ENCODE measurements at regions of chr21 and their contacts with region 1.

Region 1: GRCh38 chr21:42593007-42593806 is 60.2 kb upstream of the PDE9A start:
- DNase-seq: peak; percentile 69
- ATAC-seq: peak; percentile 73
- H3K4me3 ChIP-seq: no peak overlapping the region
- H3K4me3 Mint-ChIP-seq: no peak overlapping the region
- H3K27ac ChIP-seq: no peak overlapping the region
- H3K27ac Mint-ChIP-seq: no peak overlapping the region
- H3K4me1 ChIP-seq: peaks cover 10 to 17% of the 10 kb centered on the region in 2 donors
- H3K4me1 Mint-ChIP-seq: peaks cover 14% of the 10 kb centered on the region
- H3K27me3 ChIP-seq: peaks cover 0 to 12% (median 0%) of the 10 kb centered on the region in 4 experiments
- H3K27me3 Mint-ChIP-seq: peaks cover 18% of the 10 kb centered on the region
- CTCF ChIP-seq: peak; percentile 74

Region 2: DNA sequence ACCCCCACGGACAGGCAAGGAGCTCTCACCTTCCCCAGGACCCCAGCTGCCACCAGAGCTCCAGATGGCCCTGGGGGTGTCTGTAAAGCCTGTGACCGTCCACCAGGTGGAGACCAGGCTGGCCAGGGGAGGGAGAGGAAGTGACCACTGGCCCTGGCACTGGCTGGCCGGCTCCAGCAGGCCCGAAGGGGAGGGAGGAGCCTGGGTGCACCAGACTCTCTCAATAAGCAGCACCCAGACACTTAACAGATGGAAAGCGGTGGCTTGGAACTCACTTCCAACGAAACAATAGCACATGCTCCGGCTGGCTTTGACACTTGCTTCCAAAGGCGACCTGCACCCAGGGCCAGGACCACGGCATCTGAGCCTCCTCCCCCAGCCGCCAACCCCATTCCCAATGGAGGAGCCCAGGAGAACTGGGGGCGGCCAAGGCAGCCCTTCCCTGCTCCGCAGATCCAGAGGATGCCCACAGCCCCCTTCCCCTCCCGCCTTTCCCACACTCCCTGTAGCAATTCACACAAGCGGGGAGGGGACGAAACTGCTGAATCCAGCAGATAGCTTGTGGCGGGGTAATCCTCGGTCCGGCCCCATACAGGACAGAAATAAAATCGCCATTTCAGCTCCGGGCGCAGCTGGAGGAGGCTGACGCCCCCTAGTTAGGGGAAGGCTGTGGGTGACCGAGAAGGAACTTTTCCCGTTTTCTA is 59.5 kb after region 1 on chr21:
- CTCF ChIA-PET with region 1: no interaction called
- POLR2A ChIA-PET with region 1: no interaction called
- intact Hi-C with region 1: loop called (anchors 10 kb)
- DNase-seq: no peak
- ATAC-seq: no peak
- H3K4me3 ChIP-seq: peak overlapping the region in 1 of 5 experiments; percentile 19
- H3K4me3 Mint-ChIP-seq: peak overlapping the region; percentile 80
- H3K27ac ChIP-seq: no peak overlapping the region
- H3K27ac Mint-ChIP-seq: peak overlapping the region; percentile 32
- H3K4me1 ChIP-seq: peaks cover 31 to 34% of the 10 kb centered on the region in 2 donors
- H3K4me1 Mint-ChIP-seq: peaks cover 16% of the 10 kb centered on the region
- H3K27me3 ChIP-seq: peaks cover 0 to 53% (median 30%) of the 10 kb centered on the region in 4 experiments
- H3K27me3 Mint-ChIP-seq: peaks cover 49% of the 10 kb centered on the region
- CTCF ChIP-seq: no peak

Region 3: DNA sequence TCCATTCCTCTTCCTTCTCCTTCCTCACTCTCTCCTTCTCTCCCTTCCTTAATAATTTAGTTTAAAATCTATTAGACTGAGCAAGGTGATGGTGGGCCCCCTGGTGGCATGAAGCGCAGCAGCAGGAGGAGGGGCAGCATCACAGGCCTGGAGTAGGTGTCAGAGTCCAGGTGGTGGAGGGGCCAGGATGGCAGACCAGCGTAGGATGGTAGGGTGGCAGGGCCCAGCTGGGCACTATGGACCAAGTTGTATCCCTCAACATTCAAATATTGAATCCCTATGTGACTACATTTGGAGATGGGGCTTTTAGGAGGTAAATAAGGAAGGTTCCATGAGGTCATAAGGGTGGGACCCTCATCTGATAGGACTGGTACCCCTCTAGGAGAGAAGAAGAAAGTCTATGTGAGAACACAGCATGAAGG is 225.1 kb after region 1 on chr21:
- CTCF ChIA-PET with region 1: interaction called, 74 read pairs
- POLR2A ChIA-PET with region 1: no interaction called
- intact Hi-C with region 1: loop called (anchors 5 kb)
- DNase-seq: peak; percentile 70
- ATAC-seq: peak; percentile 69
- H3K4me3 ChIP-seq: no peak overlapping the region
- H3K4me3 Mint-ChIP-seq: no peak overlapping the region
- H3K27ac ChIP-seq: no peak overlapping the region
- H3K27ac Mint-ChIP-seq: no peak overlapping the region
- H3K4me1 ChIP-seq: no peaks in the 10 kb centered on the region
- H3K4me1 Mint-ChIP-seq: no peaks in the 10 kb centered on the region
- H3K27me3 ChIP-seq: peaks cover 0 to 3% (median 1%) of the 10 kb centered on the region in 4 experiments
- H3K27me3 Mint-ChIP-seq: peaks cover 11% of the 10 kb centered on the region
- CTCF ChIP-seq: peak; percentile 85

Region 4: GRCh38 chr21:42833439-42833815 is 240.2 kb after region 1 on chr21:
- CTCF ChIA-PET with region 1: interaction called, 10 read pairs
- POLR2A ChIA-PET with region 1: no interaction called
- intact Hi-C with region 1: loop called (anchors 5 kb)
- DNase-seq: peak; percentile 52
- ATAC-seq: peak; percentile 69
- H3K4me3 ChIP-seq: no peak overlapping the region
- H3K4me3 Mint-ChIP-seq: no peak overlapping the region
- H3K27ac ChIP-seq: no peak overlapping the region
- H3K27ac Mint-ChIP-seq: no peak overlapping the region
- H3K4me1 ChIP-seq: peaks cover 3 to 13% of the 10 kb centered on the region in 2 donors
- H3K4me1 Mint-ChIP-seq: peaks cover 14% of the 10 kb centered on the region
- H3K27me3 ChIP-seq: peaks cover 0 to 9% (median 3%) of the 10 kb centered on the region in 4 experiments
- H3K27me3 Mint-ChIP-seq: peaks cover 13% of the 10 kb centered on the region
- CTCF ChIP-seq: no peak

Region 5: DNA sequence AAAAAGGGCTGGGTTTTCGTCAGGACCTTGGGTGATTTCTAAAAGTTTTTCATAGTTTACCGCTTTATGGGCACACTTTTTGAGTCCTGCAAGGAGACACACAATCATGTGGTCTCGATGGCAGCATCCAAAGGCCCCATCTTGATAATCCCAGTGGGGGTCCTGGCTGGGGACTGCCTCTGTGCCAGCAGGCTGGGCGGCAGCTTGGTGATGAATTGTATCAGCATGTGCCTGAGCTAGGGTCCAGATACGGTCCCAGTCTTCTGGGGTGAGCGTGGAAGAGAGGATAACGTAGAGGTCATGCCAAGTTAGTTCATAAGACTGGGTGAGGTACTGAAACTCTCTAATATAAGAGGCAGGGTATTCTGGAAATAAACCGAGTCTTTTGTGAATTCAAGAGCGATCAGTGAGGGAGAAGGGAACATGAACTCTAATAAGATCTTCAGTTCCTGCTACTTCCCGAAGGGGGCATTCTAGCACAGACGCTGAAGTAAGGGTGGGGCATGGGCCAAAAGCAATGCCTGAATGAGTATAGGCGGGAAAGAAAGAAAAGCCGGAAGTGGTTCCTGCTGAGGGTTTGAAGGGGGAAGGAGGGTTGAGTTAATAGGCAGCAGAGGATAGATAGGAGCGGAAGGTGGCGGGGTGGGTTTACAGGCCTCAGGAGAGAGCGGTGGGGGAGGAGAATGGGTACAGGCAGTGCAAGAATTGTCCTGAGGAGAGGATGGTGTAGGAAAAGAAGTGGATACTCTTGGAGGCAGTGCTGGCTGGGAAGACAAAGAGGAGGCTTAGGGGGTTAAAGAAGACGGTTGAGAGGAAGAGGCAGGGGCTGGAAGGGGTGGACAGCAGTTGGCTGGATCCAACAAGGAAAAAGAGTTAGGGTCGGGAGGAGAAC is 330.6 kb after region 1 on chr21:
- CTCF ChIA-PET with region 1: no interaction called
- POLR2A ChIA-PET with region 1: no interaction called
- intact Hi-C with region 1: loop called (anchors 10 kb)
- DNase-seq: peak; percentile 84
- ATAC-seq: peak; percentile 96
- H3K4me3 ChIP-seq: peak overlapping the region in 1 of 5 experiments; percentile 4
- H3K4me3 Mint-ChIP-seq: peak overlapping the region; percentile 15
- H3K27ac ChIP-seq: no peak overlapping the region
- H3K27ac Mint-ChIP-seq: peak overlapping the region; percentile 21
- H3K4me1 ChIP-seq: peaks cover 11 to 12% of the 10 kb centered on the region in 2 donors
- H3K4me1 Mint-ChIP-seq: peaks cover 14% of the 10 kb centered on the region
- H3K27me3 ChIP-seq: no peaks in the 10 kb centered on the region
- H3K27me3 Mint-ChIP-seq: no peaks in the 10 kb centered on the region
- CTCF ChIP-seq: peak; percentile 78